Activated CD8-positive, alpha-beta T cell treated with anti-CD3 and anti-CD28 coated beads, Interleukin-2, amount 10 ng/mL, durations not matched to agents 7 days and 5 days (primary cell): ENCODE measurements at regions of chr15 and their contacts with region 1.

Region 1: GRCh38 chr15:64681424-64682024 is 93.9 kb downstream of the RBPMS2 start:
- DNase-seq: peak; percentile 32
- ATAC-seq: no peak
- H3K4me3 Mint-ChIP-seq: no peak overlapping the region
- H3K27ac Mint-ChIP-seq: peak overlapping the region; percentile 43
- H3K4me1 Mint-ChIP-seq: no peaks in the 10 kb centered on the region
- H3K27me3 Mint-ChIP-seq: no peaks in the 10 kb centered on the region

Region 2: GRCh38 chr15:64693134-64693533 is 11.6 kb after region 1 on chr15:
- CTCF ChIA-PET with region 1: interaction called, 32 read pairs
- POLR2A ChIA-PET with region 1: no interaction called
- DNase-seq: no peak
- ATAC-seq: no peak
- H3K4me3 Mint-ChIP-seq: no peak overlapping the region
- H3K27ac Mint-ChIP-seq: no peak overlapping the region
- H3K4me1 Mint-ChIP-seq: peaks cover 9% of the 10 kb centered on the region
- H3K27me3 Mint-ChIP-seq: no peaks in the 10 kb centered on the region

Region 3: DNA sequence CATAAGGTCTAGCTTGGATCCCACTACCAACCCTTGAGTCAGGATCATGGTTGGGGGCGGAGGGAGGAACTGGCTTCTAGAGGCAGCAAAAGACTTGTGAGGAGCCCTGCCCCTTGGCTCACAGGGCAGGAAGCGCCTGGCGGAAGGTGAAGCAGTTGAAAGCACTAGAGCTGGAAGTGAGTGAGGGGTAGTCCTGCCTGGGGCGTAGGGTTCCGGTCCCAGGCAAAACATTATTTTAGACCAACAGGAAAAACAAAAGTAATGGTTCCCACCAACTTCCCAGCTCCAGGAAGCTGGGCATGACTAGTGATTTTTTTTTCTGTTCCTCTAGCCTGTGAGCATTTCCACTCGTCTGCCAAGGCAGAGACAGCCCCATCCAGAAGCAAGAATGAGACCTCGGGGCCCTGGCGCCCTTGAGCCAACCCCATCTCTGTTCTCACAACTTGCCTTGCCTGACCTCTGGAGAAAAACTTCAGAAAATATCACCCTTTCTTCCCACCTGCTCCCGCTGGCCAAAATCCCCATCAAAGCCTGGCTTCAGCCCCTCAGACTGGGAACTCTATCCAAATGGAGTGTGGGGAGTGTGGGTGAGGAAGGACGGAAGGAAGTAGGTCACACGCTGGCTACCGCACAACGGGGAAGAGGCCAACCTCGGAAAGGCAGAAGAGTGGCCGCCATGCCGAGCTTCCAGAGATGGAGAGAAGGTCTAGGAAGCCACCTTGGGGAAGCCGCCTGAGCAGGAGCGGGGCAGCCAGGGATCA is 36.4 kb after region 1 on chr15:
- CTCF ChIA-PET with region 1: interaction called, 10 read pairs
- POLR2A ChIA-PET with region 1: no interaction called
- DNase-seq: no peak
- ATAC-seq: no peak
- H3K4me3 Mint-ChIP-seq: no peak overlapping the region
- H3K27ac Mint-ChIP-seq: peak overlapping the region; percentile 28
- H3K4me1 Mint-ChIP-seq: peaks cover 9% of the 10 kb centered on the region
- H3K27me3 Mint-ChIP-seq: no peaks in the 10 kb centered on the region